ENCODE measurements at regions of chr19 and their contacts with region 1.

Region 1: DNA sequence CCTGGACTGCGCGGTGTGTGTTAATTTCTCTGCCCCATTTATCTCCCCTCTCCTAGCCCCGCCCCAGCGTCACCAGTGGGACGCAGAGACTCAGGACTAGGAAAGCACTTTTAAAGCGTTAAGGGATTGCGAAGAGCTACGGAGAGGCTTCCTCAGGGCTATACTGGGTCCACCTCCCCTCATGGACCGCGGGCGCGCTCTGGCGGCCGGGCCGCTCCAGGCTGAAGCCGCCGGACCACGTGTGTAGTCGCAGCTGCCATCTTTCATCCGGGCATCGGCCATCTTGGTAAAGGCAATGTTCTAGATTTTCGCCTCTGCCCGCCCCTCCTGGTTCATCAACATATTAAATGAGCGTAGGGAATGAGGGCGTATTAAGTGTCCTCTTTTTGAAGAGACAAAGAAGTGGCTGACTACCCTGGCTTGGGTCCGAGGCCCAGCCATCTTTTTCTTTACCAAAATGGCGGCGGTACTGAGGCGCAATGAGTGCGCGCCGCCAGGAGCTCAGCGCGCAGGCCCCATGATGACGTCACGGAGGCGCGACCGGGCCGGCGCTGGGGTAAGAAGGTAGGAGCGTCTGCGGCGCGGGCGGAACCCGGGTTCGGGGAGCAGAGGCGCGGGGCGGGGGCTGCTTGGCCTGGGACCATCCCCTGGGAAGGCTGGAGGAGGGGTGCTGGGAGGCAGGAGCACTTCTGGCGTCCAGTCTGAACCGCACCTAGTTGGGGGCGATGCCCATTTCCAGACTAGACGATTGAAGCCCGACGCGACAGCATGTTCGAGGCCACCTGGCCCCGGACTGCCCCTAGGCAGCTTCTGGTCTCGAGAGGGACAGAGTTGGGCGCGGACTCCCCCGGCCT is at the start of gene CCDC124:
- DNase-seq: peak; percentile 95
- H3K4me3 ChIP-seq: peak within 1 kb of the TSS; percentile 64 to 92 (median 87)
- H3K27ac ChIP-seq: peak within 1 kb of the TSS; percentile 81 to 86 (median 84)
- H3K4me1 ChIP-seq: peaks cover 10 to 22% (median 16%) of the 10 kb centered on the region in 4 donors
- H3K27me3 ChIP-seq: no peaks in the 10 kb centered on the region
- CTCF ChIP-seq: peak; percentile 72 to 99 (median 93)
- EP300 ChIP-seq: no peak
- POLR2A ChIP-seq: peak; percentile 91
- total RNA-seq, gene CCDC124: 36.9 to 93.5 (median 41.4) TPM

Region 2: DNA sequence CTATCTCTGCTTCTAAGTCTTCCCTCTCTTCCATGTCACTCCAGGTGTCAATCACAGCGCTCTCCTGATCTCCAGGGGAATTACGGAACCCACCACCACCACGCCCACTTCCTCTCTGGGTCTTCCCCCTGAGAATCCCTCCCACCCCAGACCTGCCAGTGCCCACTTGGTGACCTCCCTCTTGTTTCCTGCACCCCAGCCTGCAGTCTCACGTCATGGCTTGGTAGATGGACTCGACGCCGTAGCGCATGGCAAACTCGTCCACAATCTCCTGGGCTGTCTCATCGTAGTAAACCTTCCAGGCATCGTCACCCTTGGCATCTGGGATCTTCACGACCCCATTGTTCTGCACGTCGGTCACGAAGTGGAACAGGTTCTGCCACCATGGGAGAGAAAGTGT is 291.5 kb before region 1 on chr19:
- in situ Hi-C with region 1: no loop called
- intact Hi-C with region 1: no loop called
- DNase-seq: no peak
- H3K4me3 ChIP-seq: no peak overlapping the region
- H3K27ac ChIP-seq: no peak overlapping the region
- H3K4me1 ChIP-seq: no peaks in the 10 kb centered on the region
- H3K27me3 ChIP-seq: no peaks in the 10 kb centered on the region
- CTCF ChIP-seq: no peak
- EP300 ChIP-seq: no peak
- POLR2A ChIP-seq: no peak

Region 3: GRCh38 chr19:17873786-17874757 is 58.6 kb before region 1 on chr19:
- in situ Hi-C with region 1: loop called in 2 of 4 experiments (anchors 5 to 10 kb)
- intact Hi-C with region 1: no loop called
- DNase-seq: peak; percentile 53
- H3K4me3 ChIP-seq: peak overlapping the region in 2 of 4 donors; percentile 25 to 31
- H3K27ac ChIP-seq: no peak overlapping the region
- H3K4me1 ChIP-seq: peaks cover 6 to 22% (median 15%) of the 10 kb centered on the region in 4 donors
- H3K27me3 ChIP-seq: peaks cover 76% of the 10 kb centered on the region
- CTCF ChIP-seq: no peak
- EP300 ChIP-seq: no peak
- POLR2A ChIP-seq: no peak

Region 4: DNA sequence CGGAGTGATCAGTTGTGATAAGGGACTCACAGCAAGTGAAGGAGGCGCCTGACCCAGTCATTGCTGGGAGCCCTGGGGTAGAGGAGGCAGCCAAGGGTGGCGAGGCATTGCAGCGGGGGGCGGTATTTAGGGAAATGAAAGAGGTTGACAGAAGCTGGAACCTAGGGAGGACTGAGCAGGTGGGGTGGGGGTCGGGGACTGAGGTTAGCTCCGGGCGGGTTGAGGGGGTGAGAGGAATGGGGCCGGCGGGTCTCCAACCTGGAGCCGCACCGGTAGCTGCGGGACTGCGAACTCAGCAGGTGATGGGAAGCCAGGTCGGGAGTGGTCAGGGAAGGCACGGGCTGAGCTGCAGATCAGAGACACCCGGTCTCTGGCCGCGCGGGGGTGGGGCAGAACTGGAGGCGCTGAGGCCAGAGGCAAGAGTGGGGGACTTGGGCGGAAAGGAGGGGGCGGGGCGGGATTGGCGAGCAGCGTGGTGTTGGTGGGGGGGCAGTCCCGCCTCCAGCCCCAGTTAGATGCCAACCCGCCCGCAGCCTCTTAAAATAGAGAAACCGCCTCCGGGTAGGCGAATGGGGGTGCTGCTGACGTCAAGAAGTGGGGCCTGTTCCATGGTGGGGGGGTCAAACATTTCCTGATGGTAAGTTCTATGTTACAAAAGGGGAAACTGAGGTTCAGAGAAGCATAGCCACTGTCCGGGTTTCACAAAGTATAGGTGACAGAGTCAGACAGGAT is 166.3 kb after region 1 on chr19:
- in situ Hi-C with region 1: no loop called
- intact Hi-C with region 1: no loop called
- DNase-seq: peak; percentile 60
- H3K4me3 ChIP-seq: peak overlapping the region in 2 of 4 donors; percentile 11 to 52
- H3K27ac ChIP-seq: peak overlapping the region in 1 of 4 donors; percentile 52
- H3K4me1 ChIP-seq: peaks cover 7 to 23% (median 18%) of the 10 kb centered on the region in 4 donors
- H3K27me3 ChIP-seq: peaks cover 37% of the 10 kb centered on the region
- CTCF ChIP-seq: no peak
- EP300 ChIP-seq: no peak
- POLR2A ChIP-seq: no peak

Measured in transverse colon (tissue), 4 donors.